Right cardiac atrium (tissue), 5 donors: ENCODE measurements at regions of chr10 and their contacts with region 1.

Region 1: GRCh38 chr10:132637477-132638129 is 100.0 kb downstream of the INPP5A start:
- DNase-seq: peak in 1 of 3 donors; percentile 4
- ATAC-seq: peak; percentile 63 to 66
- H3K4me3 ChIP-seq: no peak overlapping the region
- H3K27ac ChIP-seq: no peak overlapping the region
- H3K4me1 ChIP-seq: peaks cover 5% of the 10 kb centered on the region
- H3K27me3 ChIP-seq: no peaks in the 10 kb centered on the region

Region 2: GRCh38 chr10:132458593-132459300 is 178.9 kb before region 1 on chr10:
- intact Hi-C with region 1: loop called (anchors 2 to 5 kb)
- DNase-seq: peak; percentile 50 to 87 (median 86)
- ATAC-seq: peak; percentile 46 to 66
- H3K4me3 ChIP-seq: no peak overlapping the region
- H3K27ac ChIP-seq: no peak overlapping the region
- H3K4me1 ChIP-seq: peaks cover 4% of the 10 kb centered on the region
- H3K27me3 ChIP-seq: no peaks in the 10 kb centered on the region

Region 3: GRCh38 chr10:132506711-132507408 is 130.7 kb before region 1 on chr10:
- intact Hi-C with region 1: loop called in 2 of 4 experiments (anchors 5 to 10 kb)
- DNase-seq: peak in 2 of 3 donors; percentile 37 to 73
- ATAC-seq: peak; percentile 22 to 45
- H3K4me3 ChIP-seq: no peak overlapping the region
- H3K27ac ChIP-seq: peak overlapping the region; percentile 31
- H3K4me1 ChIP-seq: peaks cover 5% of the 10 kb centered on the region
- H3K27me3 ChIP-seq: no peaks in the 10 kb centered on the region

Region 4: DNA sequence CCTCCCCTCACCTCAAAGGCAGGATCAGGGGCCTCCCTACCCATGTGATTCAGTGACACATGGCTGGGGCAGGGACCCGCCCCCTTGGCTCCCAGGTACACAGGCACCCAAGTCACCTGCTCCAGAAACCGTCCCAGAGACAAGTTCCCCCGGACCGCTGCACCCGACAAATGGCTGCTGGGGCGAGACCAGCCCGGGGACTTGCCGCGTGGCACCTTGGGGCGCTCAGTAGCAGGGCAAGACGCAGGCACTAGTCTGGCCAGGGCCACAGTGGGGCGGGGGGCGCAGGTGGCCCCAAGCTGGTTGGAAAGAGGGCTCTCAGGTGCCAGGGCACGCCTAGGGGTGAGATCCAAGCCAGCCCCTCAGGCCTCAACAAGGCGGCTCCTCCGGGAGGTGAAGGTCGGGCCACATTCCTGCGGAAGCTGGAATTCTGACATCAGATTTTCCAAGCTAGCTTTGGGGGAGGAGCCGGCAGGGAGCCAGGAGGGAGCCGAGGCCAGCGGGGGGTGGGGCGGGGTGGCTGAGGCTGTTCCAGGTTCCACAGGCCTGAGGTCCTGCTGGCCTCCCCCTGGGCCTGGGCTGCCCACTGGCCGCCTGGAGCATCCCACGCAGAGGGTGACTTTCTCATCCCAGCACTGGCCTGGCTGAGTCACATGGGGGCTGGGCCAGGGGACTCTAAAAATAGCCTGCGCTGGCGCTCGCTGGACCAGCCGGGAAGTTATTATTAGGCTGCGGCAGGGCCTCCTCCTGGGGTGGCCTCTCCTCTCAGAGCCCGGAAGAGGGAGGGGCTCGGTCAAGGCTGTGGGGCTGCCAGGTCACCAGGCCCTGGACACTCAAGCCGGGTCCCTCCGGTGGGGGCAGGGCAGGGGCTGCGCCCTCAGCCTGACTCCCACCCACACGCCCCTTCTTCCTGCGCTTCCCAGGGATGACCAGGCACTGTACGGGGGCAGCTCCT is 120.6 kb before region 1 on chr10:
- intact Hi-C with region 1: loop called in 1 of 4 experiments (anchors 10 kb)
- DNase-seq: peak; percentile 96 to 97 (median 96)
- ATAC-seq: peak; percentile 91 to 94
- H3K4me3 ChIP-seq: no peak overlapping the region
- H3K27ac ChIP-seq: peak overlapping the region; percentile 55
- H3K4me1 ChIP-seq: peaks cover 34% of the 10 kb centered on the region
- H3K27me3 ChIP-seq: no peaks in the 10 kb centered on the region

Region 5: DNA sequence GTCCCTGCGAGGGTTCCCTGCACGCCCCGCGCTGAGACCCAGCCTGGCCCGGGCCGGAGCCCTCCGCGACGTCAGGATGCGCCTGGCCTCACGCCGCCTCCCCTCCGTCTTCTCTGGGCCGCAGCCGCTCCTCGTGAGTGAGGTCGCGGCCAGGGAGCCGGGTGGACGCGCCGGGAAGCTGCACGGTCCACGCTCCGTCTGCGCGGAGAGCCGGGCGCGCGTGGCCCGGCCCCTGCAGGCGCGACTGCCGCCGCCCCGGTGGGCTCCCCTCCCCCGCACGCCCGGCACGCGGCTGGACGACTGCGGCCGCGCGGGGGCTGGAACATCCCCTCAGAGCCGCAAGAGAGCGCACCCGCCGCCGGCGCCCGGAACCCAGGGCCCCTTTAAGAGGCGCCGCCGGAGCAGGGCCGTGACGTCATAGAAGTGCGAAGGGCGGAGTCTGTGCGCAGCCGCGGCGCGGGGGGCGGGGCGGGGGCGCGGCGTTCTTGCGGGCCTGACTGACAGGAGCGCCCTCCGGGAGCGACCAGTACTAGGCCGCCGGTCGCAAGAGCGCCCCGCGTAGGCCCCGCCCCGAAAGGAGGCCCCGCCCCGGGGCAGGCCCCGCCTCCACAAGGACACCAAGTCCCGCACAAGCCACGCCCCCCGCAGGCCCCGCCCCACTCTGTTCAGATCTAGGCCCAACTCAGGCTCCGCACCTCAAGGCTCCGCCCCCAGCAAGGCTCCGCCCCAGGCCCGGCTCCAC is 100.5 kb before region 1 on chr10:
- intact Hi-C with region 1: loop called in 1 of 4 experiments (anchors 10 kb)
- DNase-seq: peak; percentile 100
- ATAC-seq: peak; percentile 96 to 97
- H3K4me3 ChIP-seq: peak overlapping the region; percentile 38
- H3K27ac ChIP-seq: peak overlapping the region; percentile 65
- H3K4me1 ChIP-seq: peaks cover 13% of the 10 kb centered on the region
- H3K27me3 ChIP-seq: no peaks in the 10 kb centered on the region

Region 6: GRCh38 chr10:132588301-132589013 is 49.1 kb before region 1 on chr10:
- intact Hi-C with region 1: loop called in 1 of 4 experiments (anchors 10 kb)
- DNase-seq: peak in 2 of 3 donors; percentile 77 to 79
- ATAC-seq: peak; percentile 49 to 65
- H3K4me3 ChIP-seq: no peak overlapping the region
- H3K27ac ChIP-seq: peak overlapping the region; percentile 38
- H3K4me1 ChIP-seq: peaks cover 33% of the 10 kb centered on the region
- H3K27me3 ChIP-seq: no peaks in the 10 kb centered on the region